ENCODE measurements at regions of chr1 and their contacts with region 1.

Region 1: DNA sequence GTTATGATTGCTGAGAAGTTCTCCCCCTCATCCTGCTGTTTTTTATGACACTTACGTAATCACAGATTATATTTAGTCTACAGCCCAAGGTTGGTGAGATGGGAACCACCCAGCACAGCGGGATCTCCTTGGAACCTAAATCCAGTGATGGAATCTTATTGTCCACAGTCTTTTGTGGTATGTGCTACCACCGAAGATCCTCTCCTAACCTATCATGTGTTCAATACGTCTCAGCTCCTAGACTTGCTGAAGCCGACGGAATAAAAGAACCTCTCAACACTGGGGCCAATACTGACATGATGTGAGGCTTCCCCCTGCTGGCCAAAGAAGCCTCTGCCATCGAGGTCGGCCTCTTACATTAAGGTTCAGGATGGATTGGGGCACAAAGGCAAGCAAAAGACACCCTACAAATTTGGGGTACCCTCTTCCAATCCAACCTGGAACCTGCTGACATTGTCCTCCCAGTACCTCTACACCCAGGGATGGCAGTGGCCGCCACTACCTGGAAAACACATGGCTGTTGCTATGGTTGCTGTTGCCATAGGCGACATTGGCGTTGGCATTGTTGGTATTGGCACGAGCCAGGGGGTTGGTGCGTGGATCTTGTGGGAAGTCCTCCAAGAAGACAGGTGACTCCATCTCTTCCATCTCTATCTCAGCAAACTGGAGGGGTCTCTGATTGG is 19.4 kb upstream of the KIF21B start:
- DNase-seq: peak; percentile 76
- H3K4me3 Mint-ChIP-seq: no peak overlapping the region
- H3K27ac Mint-ChIP-seq: no peak overlapping the region
- H3K4me1 Mint-ChIP-seq: no peaks in the 10 kb centered on the region
- H3K27me3 Mint-ChIP-seq: peaks cover 15% of the 10 kb centered on the region

Region 2: DNA sequence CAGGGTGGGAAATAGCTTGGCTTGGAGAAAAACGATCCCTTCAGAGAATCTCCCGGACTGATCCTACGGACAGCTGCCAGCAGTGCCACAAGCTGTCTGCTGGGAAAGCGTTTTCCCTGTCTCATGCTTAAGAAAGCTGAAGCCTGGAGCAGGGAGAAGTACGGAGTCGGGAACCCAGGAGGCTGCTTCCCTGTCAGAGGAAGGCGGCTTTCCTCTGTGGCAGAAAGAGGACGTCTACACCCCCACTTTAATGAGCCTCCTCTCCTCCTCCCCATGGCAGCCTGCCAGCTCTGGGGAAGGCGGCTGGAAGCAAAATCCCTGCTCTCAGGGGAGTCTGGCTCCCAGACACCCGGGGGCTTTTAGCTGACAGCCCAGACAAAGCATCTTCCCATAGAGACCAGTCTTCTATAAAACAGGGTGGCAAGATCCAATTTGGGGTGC is 26.7 kb before region 1 on chr1:
- CTCF ChIA-PET with region 1: interaction called, 104 read pairs
- POLR2A ChIA-PET with region 1: interaction called, 9 read pairs
- DNase-seq: no peak
- H3K4me3 Mint-ChIP-seq: peak overlapping the region; percentile 69
- H3K27ac Mint-ChIP-seq: peak overlapping the region; percentile 99
- H3K4me1 Mint-ChIP-seq: peaks cover 95% of the 10 kb centered on the region
- H3K27me3 Mint-ChIP-seq: no peaks in the 10 kb centered on the region

Region 3: GRCh38 chr1:201023517-201023902 is 19.4 kb before region 1 on chr1 and contains the start of gene KIF21B:
- CTCF ChIA-PET with region 1: interaction called, 104 read pairs
- POLR2A ChIA-PET with region 1: interaction called, 9 read pairs
- DNase-seq: peak; percentile 94
- H3K4me3 Mint-ChIP-seq: peak within 1 kb of the TSS; percentile 96
- H3K27ac Mint-ChIP-seq: peak within 1 kb of the TSS; percentile 99
- H3K4me1 Mint-ChIP-seq: peaks cover 73% of the 10 kb centered on the region
- H3K27me3 Mint-ChIP-seq: no peaks in the 10 kb centered on the region
- total RNA-seq, gene KIF21B: 175 to 180 TPM

Region 4: DNA sequence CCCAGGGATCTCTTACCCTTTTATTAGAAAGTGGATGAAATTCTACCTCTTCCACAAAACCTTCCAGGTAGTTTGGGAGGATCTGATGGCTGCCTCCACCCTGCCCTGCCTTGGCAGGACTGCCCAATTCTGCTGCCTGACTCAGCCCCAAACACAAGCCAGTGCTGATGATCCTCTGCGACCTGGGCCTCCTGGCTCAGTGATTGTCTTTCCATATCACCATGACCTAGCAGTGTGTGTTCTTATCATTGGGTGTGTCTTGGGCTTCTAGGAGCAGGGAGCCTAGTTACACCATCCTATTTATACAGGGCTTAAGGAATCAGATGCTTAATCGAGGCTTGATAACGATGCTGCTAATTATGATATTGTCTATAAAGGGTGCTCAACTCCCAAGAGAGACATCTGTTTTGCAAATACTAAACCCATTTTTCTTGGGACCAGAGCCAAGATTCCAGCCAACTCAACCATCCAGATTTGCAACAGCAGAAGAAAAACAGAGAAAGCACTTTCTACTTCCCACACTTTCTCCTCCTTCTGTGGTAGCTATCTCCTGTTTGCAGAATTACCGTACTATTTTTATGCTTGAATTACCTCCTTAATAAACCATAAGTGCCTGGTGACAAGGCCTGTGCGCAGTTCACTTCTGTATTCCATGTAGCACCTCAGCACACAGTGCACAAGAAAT is 17.1 kb after region 1 on chr1:
- CTCF ChIA-PET with region 1: no interaction called
- POLR2A ChIA-PET with region 1: no interaction called
- DNase-seq: no peak
- H3K4me3 Mint-ChIP-seq: no peak overlapping the region
- H3K27ac Mint-ChIP-seq: no peak overlapping the region
- H3K4me1 Mint-ChIP-seq: peaks cover 17% of the 10 kb centered on the region
- H3K27me3 Mint-ChIP-seq: peaks cover 12% of the 10 kb centered on the region